CD8-positive, alpha-beta memory T cell (primary cell): ENCODE measurements at regions of chr4 and their contacts with region 1.

Region 1: DNA sequence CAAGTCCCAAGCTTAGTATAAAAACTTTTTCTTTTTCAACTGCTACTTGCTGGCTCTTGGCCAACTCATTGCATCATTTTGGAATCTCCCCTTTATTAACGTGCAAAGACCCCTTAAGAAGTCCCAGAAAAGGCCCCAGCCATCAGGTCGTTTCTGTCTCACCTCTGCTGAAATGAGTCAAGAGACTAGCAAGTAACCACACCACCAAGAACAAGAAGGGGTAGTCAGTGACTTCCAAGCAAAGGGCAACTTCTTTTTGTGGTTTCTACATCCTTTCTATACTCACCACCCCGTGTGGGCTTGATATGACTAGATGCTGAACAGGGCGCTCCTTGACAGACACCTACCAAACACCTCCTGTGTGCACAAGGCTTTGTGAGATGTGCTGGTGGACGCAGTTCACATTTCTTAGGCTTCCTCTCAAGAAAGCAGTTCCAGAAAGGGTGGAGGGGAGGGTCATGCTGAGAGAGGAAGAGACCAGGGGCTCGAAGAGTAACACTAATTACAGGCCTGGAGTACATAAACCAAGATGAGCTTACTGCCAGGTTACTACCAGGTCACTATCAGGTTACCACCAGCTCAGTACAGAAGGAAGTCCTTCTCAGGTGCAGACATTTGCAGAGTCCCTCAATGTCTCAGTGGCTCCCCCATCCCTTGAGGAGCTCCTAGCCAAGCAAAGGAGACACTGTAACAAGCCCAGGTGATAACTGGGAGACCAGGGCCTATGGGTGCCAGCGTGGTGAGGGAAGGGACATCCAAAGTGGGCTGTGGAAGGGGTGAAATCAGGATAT is 19.3 kb downstream of the JAKMIP1 start:
- DNase-seq: peak in 4 of 5 donors; percentile 44 to 79 (median 66)
- H3K4me3 ChIP-seq: peak overlapping the region; percentile 4
- H3K4me3 Mint-ChIP-seq: peak overlapping the region; percentile 22 to 83 (median 67)
- H3K27ac ChIP-seq: peak overlapping the region; percentile 50
- H3K27ac Mint-ChIP-seq: peak overlapping the region; percentile 83 to 98 (median 94)
- H3K4me1 ChIP-seq: peaks cover 71% of the 10 kb centered on the region
- H3K4me1 Mint-ChIP-seq: peaks cover 76 to 88% (median 84%) of the 10 kb centered on the region in 3 donors
- H3K27me3 ChIP-seq: no peaks in the 10 kb centered on the region
- H3K27me3 Mint-ChIP-seq: peaks cover 1 to 3% of the 10 kb centered on the region in 2 donors

Region 2: DNA sequence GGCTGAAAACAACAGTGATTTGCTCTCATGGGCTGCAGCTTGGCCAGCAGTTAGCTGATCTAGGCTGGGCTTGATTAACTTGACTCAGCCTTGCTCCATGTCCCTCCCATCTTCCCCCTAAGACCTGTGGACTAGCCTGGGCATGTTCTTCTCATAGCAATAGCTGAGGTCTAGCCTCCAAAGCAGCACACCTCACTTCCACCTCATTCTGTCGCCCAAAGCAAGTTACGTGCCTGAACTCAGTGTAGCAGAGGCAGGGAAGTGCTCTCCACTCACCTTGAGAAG is 407.8 kb before region 1 on chr4:
- CTCF ChIA-PET with region 1: no interaction called
- POLR2A ChIA-PET with region 1: no interaction called
- DNase-seq: no peak
- H3K4me3 ChIP-seq: no peak overlapping the region
- H3K4me3 Mint-ChIP-seq: no peak overlapping the region
- H3K27ac ChIP-seq: no peak overlapping the region
- H3K27ac Mint-ChIP-seq: no peak overlapping the region
- H3K4me1 ChIP-seq: no peaks in the 10 kb centered on the region
- H3K4me1 Mint-ChIP-seq: no peaks in the 10 kb centered on the region
- H3K27me3 ChIP-seq: no peaks in the 10 kb centered on the region
- H3K27me3 Mint-ChIP-seq: peaks cover 0 to 3% of the 10 kb centered on the region in 2 donors

Region 3: DNA sequence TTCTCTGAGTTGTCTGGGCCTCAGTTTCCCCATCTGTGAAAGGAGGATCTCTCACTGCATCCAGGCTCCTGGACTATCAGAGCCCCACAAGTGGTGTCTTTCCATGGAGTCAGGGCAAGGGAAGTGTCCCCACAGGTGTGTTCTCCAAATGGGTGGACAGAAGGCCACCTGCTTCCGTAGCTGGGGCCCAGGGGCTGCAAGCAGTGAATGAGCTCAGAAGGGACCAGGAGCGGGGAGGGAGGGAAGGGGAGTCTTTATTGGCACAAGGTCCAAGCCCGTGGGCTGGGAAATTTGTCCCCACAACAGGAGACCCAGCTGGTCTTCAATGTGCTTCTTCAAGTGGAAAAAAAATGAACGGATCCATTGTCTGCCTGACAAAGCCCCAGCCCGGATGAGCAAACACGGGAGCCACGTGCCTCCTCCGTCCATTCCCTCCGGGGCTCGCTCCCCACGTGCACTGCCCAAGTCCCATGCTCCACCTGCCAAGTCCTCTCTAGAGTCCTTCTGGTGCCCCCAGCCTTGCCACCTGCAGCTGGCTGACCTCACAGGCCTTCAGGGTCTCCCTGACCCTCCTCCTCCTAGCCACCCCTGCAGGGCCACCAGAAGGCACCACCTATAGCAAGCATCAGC is 52.7 kb before region 1 on chr4:
- CTCF ChIA-PET with region 1: no interaction called
- POLR2A ChIA-PET with region 1: no interaction called
- DNase-seq: no peak
- H3K4me3 ChIP-seq: no peak overlapping the region
- H3K4me3 Mint-ChIP-seq: no peak overlapping the region
- H3K27ac ChIP-seq: no peak overlapping the region
- H3K27ac Mint-ChIP-seq: no peak overlapping the region
- H3K4me1 ChIP-seq: no peaks in the 10 kb centered on the region
- H3K4me1 Mint-ChIP-seq: peaks cover 5 to 17% (median 12%) of the 10 kb centered on the region in 3 donors
- H3K27me3 ChIP-seq: no peaks in the 10 kb centered on the region
- H3K27me3 Mint-ChIP-seq: no peaks in the 10 kb centered on the region

Region 4: GRCh38 chr4:6200011-6200921 is 19.2 kb after region 1 on chr4 and contains the start of gene JAKMIP1:
- CTCF ChIA-PET with region 1: interaction called, 9 read pairs
- POLR2A ChIA-PET with region 1: interaction called, 12 read pairs
- DNase-seq: peak; percentile 38 to 92 (median 87)
- H3K4me3 ChIP-seq: peak within 1 kb of the TSS; percentile 58
- H3K4me3 Mint-ChIP-seq: peak within 1 kb of the TSS; percentile 87 to 92 (median 90)
- H3K27ac ChIP-seq: peak within 1 kb of the TSS; percentile 55
- H3K27ac Mint-ChIP-seq: peak within 1 kb of the TSS; percentile 47 to 96 (median 91)
- H3K4me1 ChIP-seq: peaks cover 28% of the 10 kb centered on the region
- H3K4me1 Mint-ChIP-seq: peaks cover 36 to 45% (median 44%) of the 10 kb centered on the region in 3 donors
- H3K27me3 ChIP-seq: no peaks in the 10 kb centered on the region
- H3K27me3 Mint-ChIP-seq: peaks cover 8 to 11% of the 10 kb centered on the region in 2 donors
- total RNA-seq, gene JAKMIP1: 12.7 to 14.2 TPM